PC-9 (cell line): ENCODE measurements at regions of chr16 and their contacts with region 1.

Region 1: DNA sequence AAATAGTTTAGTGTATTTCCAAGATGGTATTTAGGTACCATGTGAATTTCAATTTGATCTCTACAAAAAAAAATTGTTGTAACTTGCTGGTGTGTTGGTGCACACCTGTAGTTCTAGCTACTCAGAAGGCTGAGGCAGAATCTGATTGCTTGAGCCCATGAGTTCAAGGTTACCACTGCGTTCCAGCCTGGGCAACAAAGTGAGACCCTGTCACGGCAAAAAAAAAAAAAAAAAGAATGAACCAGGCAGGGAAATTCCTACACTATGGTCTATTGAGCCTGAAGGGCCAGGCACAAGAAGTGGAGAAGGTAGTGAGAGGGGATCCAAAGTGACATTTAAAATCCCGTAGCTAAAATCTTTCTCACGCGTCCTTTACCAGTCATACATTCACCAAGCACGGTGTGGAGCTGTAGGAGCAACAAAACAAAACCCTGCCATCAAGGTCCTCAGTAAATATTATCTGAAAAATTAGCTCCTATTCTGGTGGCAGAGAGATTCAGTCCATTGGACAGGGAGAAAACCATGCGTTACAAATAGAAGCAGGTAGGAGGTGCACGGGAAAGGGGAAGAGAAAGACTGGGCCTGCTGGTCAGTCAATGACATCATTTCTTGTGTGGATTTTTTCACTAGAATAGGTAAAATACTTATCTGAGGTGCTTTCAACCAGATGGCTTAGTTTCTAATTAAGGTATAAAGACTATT is 27.3 kb downstream of the TXNDC11 start:
- DNase-seq: no peak
- H3K4me3 ChIP-seq: no peak overlapping the region
- H3K27ac ChIP-seq: no peak overlapping the region
- H3K4me1 ChIP-seq: no peaks in the 10 kb centered on the region
- H3K27me3 ChIP-seq: no peaks in the 10 kb centered on the region
- CTCF ChIP-seq: no peak

Region 2: GRCh38 chr16:10949370-10949970 is 765.9 kb before region 1 on chr16:
- CTCF ChIA-PET with region 1: interaction called, 3 read pairs
- POLR2A ChIA-PET with region 1: no interaction called
- intact Hi-C with region 1: loop called (anchors 5 kb)
- DNase-seq: peak; percentile 42 to 79
- H3K4me3 ChIP-seq: no peak overlapping the region
- H3K27ac ChIP-seq: peak overlapping the region; percentile 41
- H3K4me1 ChIP-seq: peaks cover 45% of the 10 kb centered on the region
- H3K27me3 ChIP-seq: no peaks in the 10 kb centered on the region
- CTCF ChIP-seq: no peak; the same call in 1 of the 2 replicates

Region 3: DNA sequence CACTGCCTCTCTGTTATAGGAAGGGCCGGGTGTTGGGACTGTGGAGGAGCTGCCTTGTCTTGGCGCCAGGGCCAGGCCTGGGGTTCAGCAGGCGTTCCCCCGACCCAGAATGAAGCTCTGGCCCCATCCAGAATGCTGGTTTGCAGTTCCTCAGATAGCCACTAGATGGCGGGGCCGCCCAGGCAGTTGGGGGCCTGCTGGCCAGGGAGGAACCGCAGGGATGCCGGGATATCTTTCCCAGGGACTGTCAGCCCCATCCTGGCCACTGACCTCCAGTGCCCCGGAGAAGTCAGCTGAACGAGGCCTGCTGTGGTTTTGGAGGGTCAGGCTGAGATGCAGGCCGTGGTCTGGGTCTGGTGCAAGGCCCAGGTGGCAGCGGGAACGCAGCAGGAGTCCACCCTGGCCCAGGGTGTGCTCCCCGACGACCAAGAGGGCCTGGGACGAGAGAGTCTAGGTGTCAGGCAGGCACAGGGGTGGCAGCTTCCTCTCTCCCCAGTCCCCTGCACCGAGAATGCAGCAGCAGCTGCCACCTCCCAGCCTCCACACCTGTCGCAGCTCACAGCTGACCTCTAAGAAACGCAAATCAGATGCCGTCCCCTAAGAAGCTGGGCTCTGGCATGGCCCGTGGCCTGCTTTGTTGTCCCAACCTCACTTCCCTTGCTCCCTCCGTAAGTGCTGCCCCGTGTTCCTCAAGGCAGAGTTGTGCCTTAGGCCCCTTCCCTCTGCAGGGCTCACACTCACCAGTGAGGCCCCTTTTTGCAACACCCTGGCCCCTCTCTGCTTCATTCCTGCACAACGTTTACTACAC is 319.0 kb before region 1 on chr16:
- CTCF ChIA-PET with region 1: interaction called, 3 read pairs
- POLR2A ChIA-PET with region 1: no interaction called
- intact Hi-C with region 1: loop called (anchors 2 kb)
- DNase-seq: peak in 1 of 2 experiments; percentile 82
- H3K4me3 ChIP-seq: no peak overlapping the region
- H3K27ac ChIP-seq: no peak overlapping the region
- H3K4me1 ChIP-seq: 0 out of 2 replicates have a peak, but pooled peaks cover under 1% of the 10 kb centered on the region
- H3K27me3 ChIP-seq: no peaks in the 10 kb centered on the region
- CTCF ChIP-seq: peak; percentile 99

Region 4: GRCh38 chr16:11562941-11563340 is 152.5 kb before region 1 on chr16:
- CTCF ChIA-PET with region 1: interaction called, 13 read pairs
- POLR2A ChIA-PET with region 1: no interaction called
- intact Hi-C with region 1: no loop called
- DNase-seq: no peak
- H3K4me3 ChIP-seq: no peak overlapping the region
- H3K27ac ChIP-seq: no peak overlapping the region
- H3K4me1 ChIP-seq: no peaks in the 10 kb centered on the region
- H3K27me3 ChIP-seq: no peaks in the 10 kb centered on the region
- CTCF ChIP-seq: no peak

Region 5: DNA sequence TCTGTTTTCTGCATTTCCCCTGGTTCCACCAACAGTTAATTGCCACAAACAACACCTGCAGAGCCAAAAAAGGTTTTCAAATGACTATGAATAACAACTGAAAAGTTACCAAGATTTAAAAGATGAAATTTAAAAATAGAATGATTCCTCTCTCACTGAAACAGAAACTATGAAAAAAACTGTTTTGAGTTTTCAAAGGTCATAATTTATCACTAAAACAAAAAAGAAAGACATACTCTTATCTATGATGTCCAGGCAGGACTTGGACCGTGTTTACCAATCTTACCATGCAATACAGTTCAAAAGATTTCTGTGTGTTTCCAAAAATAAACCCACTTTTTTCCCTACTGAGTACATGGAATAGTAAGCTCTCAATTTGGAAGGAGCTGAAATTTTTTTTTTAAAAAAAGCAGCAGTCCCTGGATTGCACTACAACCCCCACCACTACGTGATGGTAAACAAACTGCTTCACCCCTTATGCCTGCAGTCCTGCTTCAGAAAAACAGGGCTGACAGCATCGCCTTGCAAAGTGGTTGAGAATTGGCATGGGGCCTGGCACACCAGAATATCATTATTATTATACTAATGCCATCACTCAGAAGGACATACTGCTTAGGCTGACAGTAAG is 18.7 kb after region 1 on chr16:
- CTCF ChIA-PET with region 1: no interaction called
- POLR2A ChIA-PET with region 1: no interaction called
- intact Hi-C with region 1: no loop called
- DNase-seq: no peak
- H3K4me3 ChIP-seq: no peak overlapping the region
- H3K27ac ChIP-seq: no peak overlapping the region
- H3K4me1 ChIP-seq: no peaks in the 10 kb centered on the region
- H3K27me3 ChIP-seq: no peaks in the 10 kb centered on the region
- CTCF ChIP-seq: no peak